ENCODE measurements at regions of chr9 and their contacts with region 1.

Region 1: DNA sequence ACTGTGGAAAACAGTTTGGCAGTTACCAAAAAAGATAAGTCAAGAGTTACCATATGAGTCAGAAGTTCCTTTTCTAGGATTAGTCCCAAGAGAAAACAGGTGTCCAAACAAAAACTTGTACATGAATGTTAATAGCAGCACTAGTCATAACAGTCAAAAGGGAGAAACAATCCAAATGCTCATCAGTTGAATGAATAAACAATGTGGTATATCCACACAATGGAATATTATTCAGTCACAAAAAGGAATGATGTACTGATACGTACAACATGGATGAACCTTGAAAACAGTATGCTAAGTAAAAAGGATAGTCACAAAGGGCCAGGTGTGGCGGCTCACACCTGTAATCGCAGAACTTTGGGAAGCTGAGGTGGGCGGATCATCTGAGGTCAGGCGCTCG is 7.9 kb downstream of the ZNF510 start:
- DNase-seq: no peak
- ATAC-seq: no peak
- H3K4me3 ChIP-seq: no peak overlapping the region
- H3K4me3 Mint-ChIP-seq: no peak overlapping the region
- H3K27ac ChIP-seq: no peak overlapping the region
- H3K27ac Mint-ChIP-seq: no peak overlapping the region
- H3K4me1 ChIP-seq: no peaks in the 10 kb centered on the region
- H3K4me1 Mint-ChIP-seq: peaks cover 22% of the 10 kb centered on the region
- H3K27me3 ChIP-seq: no peaks in the 10 kb centered on the region
- H3K27me3 Mint-ChIP-seq: no peaks in the 10 kb centered on the region
- CTCF ChIP-seq: no peak

Region 2: DNA sequence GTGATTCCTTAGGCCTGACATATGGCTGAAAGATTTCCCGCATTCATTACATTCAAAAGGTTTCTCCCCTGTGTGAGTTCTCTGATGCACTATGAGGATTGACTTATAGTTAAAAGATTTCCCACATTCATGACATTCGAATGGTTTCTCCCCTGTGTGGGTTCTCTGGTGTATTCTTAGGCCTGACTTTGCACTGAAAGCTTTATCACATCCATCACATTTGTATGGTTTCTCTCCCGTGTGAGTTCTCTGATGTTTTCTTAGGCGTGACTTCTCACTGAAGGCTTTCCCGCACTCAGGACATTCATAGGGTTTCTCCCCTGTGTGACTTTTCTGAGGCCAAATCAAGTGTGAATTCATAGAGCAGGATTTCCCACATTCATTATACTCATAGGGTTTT is 48.5 kb after region 1 on chr9:
- CTCF ChIA-PET with region 1: no interaction called
- POLR2A ChIA-PET with region 1: no interaction called
- intact Hi-C with region 1: loop called in 1 of 2 experiments (anchors 10 kb)
- DNase-seq: no peak
- ATAC-seq: no peak
- H3K4me3 ChIP-seq: no peak overlapping the region
- H3K4me3 Mint-ChIP-seq: no peak overlapping the region
- H3K27ac ChIP-seq: no peak overlapping the region
- H3K27ac Mint-ChIP-seq: no peak overlapping the region
- H3K4me1 ChIP-seq: no peaks in the 10 kb centered on the region
- H3K4me1 Mint-ChIP-seq: no peaks in the 10 kb centered on the region
- H3K27me3 ChIP-seq: no peaks in the 10 kb centered on the region
- H3K27me3 Mint-ChIP-seq: no peaks in the 10 kb centered on the region
- CTCF ChIP-seq: no peak

Region 3: DNA sequence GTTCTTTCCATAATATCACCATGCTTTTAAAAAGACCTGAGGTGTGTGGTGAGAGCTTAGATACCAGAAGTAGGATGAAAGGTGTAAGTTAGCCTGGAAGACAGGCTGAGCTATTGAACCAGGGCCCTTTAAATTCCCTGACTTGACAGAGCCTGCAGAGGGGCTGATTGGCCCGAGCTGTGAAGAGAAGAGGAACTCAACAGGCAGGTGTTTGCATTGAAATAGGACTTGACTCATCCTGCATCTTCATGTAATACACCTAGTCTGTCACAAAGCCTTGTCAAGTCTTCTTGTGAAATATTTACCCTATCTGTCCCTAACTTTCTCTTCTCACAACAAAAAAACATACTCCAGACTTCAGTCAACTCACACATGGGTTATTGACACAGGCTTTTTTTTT is 1196.5 kb after region 1 on chr9:
- CTCF ChIA-PET with region 1: no interaction called
- POLR2A ChIA-PET with region 1: no interaction called
- intact Hi-C with region 1: loop called in 1 of 2 experiments (anchors 5 kb)
- DNase-seq: no peak
- ATAC-seq: no peak
- H3K4me3 ChIP-seq: no peak overlapping the region
- H3K4me3 Mint-ChIP-seq: no peak overlapping the region
- H3K27ac ChIP-seq: no peak overlapping the region
- H3K27ac Mint-ChIP-seq: no peak overlapping the region
- H3K4me1 ChIP-seq: peaks cover 12% of the 10 kb centered on the region
- H3K4me1 Mint-ChIP-seq: peaks cover 16% of the 10 kb centered on the region
- H3K27me3 ChIP-seq: no peaks in the 10 kb centered on the region
- H3K27me3 Mint-ChIP-seq: no peaks in the 10 kb centered on the region
- CTCF ChIP-seq: no peak

Measured in CD8-positive, alpha-beta T cell (primary cell).